Gastrocnemius medialis (tissue), 4 donors: ENCODE measurements at regions of chr7 and their contacts with region 1.

Region 1: GRCh38 chr7:50679218-50680007 is 103.3 kb downstream of the GRB10 start:
- DNase-seq: no peak
- ATAC-seq: peak; percentile 85 to 88
- H3K4me3 ChIP-seq: no peak overlapping the region
- H3K27ac ChIP-seq: peak overlapping the region; percentile 73 to 97 (median 84)
- H3K4me1 ChIP-seq: peaks cover 73 to 79% of the 10 kb centered on the region in 2 donors
- H3K27me3 ChIP-seq: no peaks in the 10 kb centered on the region
- CTCF ChIP-seq: peak; percentile 41 to 68 (median 48)
- POLR2A ChIP-seq: peak; percentile 16 to 44

Region 2: DNA sequence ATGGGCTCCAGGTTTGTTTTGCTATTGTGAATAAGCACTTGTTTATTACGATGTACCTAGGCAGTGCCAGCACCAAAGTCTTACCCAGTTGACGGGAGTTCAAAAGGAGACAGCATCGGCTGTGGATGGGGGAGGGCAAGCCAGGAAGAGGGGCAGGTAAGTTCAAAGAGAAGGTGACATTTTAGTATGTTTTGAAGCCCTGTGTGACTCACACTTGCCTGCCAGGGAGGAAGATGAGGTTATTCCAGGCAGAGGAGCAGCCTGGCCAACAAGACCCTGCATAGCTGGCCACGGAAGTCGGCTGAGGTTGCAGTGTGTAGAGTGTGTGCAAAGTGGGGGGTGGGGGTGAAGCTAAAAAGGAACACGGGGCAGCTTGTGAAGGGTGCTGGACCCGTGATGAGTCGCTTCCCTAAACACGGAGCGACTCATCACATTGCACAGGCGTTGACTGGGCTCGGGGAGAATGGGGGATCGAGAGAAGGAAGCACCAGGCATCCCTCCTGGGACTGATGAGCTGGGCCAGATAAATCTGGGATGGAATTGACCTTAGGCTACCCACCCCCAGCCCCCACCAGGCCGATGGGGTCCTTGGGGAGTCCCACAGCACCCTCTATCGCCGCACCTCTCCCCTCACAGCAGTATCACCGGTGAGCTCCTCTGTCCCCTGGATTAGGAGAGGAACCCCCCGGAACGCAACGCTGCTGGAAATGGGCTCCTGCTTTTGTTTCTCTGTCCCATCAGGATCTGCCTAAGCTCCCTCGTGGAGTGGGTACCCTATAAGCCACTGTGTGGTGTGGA is 472.8 kb before region 1 on chr7:
- in situ Hi-C with region 1: loop called in 2 of 4 experiments (anchors 10 to 25 kb)
- intact Hi-C with region 1: no loop called
- DNase-seq: no peak
- ATAC-seq: no peak
- H3K4me3 ChIP-seq: no peak overlapping the region
- H3K27ac ChIP-seq: no peak overlapping the region
- H3K4me1 ChIP-seq: no peaks in the 10 kb centered on the region
- H3K27me3 ChIP-seq: no peaks in the 10 kb centered on the region
- CTCF ChIP-seq: no peak
- POLR2A ChIP-seq: no peak

Region 3: DNA sequence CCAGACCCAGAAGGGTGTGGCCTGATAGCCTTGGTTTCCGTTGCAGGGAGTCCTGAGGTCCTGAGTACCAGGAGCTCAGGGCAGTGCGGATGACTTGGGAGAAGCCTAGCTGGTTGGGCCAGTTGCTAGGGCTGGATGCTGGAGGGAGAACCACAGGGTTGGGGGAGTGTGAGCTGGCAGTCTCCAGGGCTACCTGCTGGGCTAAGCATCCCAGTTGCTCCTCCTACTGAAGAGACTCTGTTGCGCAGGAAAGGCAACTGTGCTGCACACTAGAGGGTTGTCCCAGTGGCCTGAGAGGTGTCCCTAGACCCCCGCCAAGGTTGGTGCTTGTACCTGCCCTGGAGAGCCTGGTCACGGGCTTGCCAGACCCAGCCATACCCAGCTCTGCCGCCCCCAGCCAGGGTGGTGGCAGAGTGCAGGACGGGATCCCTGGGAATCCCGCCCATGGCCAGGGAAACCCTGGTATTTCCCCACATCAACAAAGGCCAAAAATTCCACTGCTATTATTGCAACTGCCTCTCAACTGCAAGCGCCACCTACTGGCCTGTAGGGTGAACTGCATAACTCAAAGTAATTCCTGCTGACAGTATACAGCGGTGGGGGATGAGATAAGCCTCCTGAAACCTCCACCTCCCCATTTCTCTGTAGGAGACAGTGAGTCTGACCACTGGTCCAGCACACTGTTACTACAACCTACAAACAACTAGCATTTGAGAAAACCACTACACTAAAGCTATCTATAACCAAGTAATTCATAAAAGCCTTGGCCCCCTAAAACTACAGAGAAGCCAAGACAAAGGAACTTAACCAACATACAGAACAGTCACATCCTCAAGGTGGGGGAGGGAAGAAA is 46.6 kb before region 1 on chr7:
- in situ Hi-C with region 1: no loop called
- intact Hi-C with region 1: loop called (anchors 2 kb)
- DNase-seq: peak in 1 of 2 donors; percentile 68
- ATAC-seq: peak in 1 of 2 donors; percentile 50
- H3K4me3 ChIP-seq: no peak overlapping the region
- H3K27ac ChIP-seq: peak overlapping the region; percentile 77 to 93 (median 82)
- H3K4me1 ChIP-seq: peaks cover 60 to 79% of the 10 kb centered on the region in 2 donors
- H3K27me3 ChIP-seq: no peaks in the 10 kb centered on the region
- CTCF ChIP-seq: peak; percentile 75 to 91 (median 81)
- POLR2A ChIP-seq: no peak

Region 4: DNA sequence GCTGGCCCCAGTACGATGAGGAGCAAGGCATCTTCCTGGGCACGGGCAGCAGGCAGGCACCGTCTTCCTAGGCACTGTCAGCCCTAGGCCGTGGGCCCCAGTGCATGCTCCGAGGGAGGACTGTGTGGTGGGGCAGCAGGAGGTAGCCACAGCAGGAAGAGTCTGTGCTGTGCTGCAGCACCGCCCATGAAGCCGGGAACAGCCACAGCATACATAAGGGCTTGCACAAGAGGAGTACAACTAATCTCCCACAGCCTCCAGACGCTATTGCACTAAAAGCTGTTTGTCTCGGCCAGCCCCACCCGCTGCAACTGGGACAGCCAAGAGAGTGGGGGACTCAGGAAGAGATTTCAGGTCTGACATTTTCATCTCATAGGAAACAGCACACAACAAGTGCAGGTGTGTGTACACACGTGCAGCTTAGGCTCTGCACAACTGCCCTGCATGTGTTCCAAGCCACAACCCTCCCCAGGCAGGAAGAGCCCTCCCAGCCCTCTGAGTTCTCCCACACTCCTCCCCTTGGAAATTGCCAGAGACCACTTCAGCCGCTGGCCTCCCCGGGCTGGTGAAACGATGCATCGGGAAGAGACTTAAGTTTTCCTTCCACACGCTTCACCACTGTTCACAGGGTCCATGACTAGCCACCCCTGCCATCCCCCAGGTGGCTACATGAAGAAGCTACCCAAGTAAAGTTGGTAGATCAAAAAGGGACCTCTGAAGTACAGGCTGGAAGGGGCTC is 26.1 kb before region 1 on chr7:
- in situ Hi-C with region 1: no loop called
- intact Hi-C with region 1: loop called (anchors 1 kb)
- DNase-seq: peak; percentile 85 to 91
- ATAC-seq: peak; percentile 35 to 48
- H3K4me3 ChIP-seq: peak overlapping the region; percentile 7 to 38 (median 26)
- H3K27ac ChIP-seq: peak overlapping the region; percentile 93 to 97 (median 94)
- H3K4me1 ChIP-seq: peaks cover 62 to 66% of the 10 kb centered on the region in 2 donors
- H3K27me3 ChIP-seq: no peaks in the 10 kb centered on the region
- CTCF ChIP-seq: peak in 1 of 5 experiments; percentile 21
- POLR2A ChIP-seq: peak; percentile 63 to 74

Region 5: GRCh38 chr7:51067757-51068156 is 388.3 kb after region 1 on chr7:
- in situ Hi-C with region 1: no loop called
- intact Hi-C with region 1: loop called (anchors 10 kb)
- DNase-seq: peak in 1 of 2 donors; percentile 36
- ATAC-seq: peak; percentile 57 to 58
- H3K4me3 ChIP-seq: no peak overlapping the region
- H3K27ac ChIP-seq: no peak overlapping the region
- H3K4me1 ChIP-seq: peaks cover 6 to 8% of the 10 kb centered on the region in 2 donors
- H3K27me3 ChIP-seq: no peaks in the 10 kb centered on the region
- CTCF ChIP-seq: peak; percentile 58 to 77 (median 72)
- POLR2A ChIP-seq: no peak